ENCODE measurements at regions of chr3 and their contacts with region 1.

Region 1: DNA sequence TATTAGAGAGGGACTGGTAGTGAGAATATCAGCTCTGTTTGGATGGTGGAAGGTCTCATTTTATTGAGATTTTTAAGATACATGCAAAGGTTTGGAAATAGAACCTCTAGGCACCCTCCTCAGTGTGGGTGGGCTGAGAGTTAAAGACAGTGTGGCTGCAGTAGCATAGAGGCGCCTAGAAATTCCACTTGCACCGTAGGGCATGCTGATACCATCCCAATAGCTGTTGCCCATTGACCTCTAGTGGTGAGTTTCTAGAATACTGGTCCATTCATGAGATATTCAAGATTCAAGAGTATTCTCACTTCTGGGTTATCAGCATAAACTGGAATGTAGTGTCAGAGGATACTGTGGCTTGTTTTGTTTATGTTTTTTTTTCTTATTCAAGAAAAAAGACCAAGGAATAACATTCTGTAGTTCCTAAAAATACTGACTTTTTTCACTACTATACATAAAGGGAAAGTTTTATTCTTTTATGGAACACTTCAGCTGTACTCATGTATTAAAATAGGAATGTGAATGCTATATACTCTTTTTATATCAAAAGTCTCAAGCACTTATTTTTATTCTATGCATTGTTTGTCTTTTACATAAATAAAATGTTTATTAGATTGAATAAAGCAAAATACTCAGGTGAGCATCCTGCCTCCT is 87.2 kb downstream of the TGFBR2 start:
- DNase-seq: peak; percentile 83
- H3K4me3 Mint-ChIP-seq: no peak overlapping the region
- H3K27ac Mint-ChIP-seq: peak overlapping the region; percentile 27
- H3K4me1 Mint-ChIP-seq: peaks cover 35% of the 10 kb centered on the region
- H3K27me3 Mint-ChIP-seq: no peaks in the 10 kb centered on the region

Region 2: DNA sequence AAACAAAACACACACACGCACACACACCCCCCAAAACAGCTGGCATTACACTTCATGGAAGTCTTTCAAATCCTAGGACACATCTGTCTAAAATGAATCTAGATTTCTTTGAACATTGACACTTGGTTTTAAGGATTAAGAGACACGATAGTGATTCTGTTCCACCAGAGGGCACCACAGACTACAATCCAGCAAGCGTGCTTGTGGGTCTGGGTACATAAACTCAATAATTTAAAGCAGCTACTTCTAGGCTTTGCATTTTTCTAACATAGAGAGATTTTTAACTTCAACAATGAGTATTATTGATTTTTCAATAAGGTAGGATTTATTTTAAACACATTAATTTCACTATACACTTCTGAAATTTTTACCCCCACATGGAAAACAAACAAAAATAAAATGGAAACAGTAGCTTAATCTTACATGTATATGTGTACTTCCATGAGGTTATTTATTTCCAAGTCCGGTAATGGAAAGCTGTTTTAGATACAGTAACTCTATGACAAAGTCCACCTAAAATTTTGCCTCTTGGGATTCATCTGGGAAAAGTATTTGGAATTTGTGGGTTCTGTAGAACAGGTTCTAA is 651.2 kb before region 1 on chr3:
- intact Hi-C with region 1: loop called (anchors 1 kb)
- DNase-seq: peak; percentile 86
- H3K4me3 Mint-ChIP-seq: no peak overlapping the region
- H3K27ac Mint-ChIP-seq: no peak overlapping the region
- H3K4me1 Mint-ChIP-seq: no peaks in the 10 kb centered on the region
- H3K27me3 Mint-ChIP-seq: peaks cover 27% of the 10 kb centered on the region

Region 3: DNA sequence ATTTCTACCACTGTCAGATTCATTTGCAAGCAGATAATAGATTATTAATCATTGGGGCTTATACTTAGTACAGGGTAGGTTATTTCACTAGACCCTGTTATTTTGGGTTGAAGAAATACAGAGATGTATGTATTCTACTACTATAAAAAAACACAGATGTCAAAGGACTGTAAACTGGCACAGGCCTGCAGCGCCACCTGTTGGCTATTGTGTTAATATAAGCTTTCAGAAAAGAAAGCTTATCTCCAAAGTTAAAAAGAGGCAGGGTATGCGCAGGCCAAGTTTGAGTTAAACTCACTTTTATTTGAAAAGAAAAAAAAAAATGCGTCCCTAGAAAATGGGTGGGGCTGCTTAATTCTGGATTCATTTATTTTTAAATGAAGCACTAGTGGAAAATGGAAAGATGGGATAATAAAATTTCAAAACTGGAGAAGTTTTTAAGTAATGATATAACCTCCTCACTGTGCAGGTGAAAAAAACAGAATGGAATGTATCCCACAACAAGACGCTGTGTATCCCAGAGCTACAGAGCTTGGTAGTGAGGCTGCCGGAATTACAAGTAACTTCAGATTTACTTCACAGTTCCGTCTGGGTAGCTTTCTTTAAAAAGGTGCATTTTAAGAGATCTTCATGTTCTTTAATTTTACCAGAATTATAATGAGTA is 494.4 kb before region 1 on chr3:
- intact Hi-C with region 1: loop called (anchors 1 kb)
- DNase-seq: peak; percentile 89
- H3K4me3 Mint-ChIP-seq: no peak overlapping the region
- H3K27ac Mint-ChIP-seq: no peak overlapping the region
- H3K4me1 Mint-ChIP-seq: peaks cover 4% of the 10 kb centered on the region
- H3K27me3 Mint-ChIP-seq: peaks cover 2% of the 10 kb centered on the region

Region 4: DNA sequence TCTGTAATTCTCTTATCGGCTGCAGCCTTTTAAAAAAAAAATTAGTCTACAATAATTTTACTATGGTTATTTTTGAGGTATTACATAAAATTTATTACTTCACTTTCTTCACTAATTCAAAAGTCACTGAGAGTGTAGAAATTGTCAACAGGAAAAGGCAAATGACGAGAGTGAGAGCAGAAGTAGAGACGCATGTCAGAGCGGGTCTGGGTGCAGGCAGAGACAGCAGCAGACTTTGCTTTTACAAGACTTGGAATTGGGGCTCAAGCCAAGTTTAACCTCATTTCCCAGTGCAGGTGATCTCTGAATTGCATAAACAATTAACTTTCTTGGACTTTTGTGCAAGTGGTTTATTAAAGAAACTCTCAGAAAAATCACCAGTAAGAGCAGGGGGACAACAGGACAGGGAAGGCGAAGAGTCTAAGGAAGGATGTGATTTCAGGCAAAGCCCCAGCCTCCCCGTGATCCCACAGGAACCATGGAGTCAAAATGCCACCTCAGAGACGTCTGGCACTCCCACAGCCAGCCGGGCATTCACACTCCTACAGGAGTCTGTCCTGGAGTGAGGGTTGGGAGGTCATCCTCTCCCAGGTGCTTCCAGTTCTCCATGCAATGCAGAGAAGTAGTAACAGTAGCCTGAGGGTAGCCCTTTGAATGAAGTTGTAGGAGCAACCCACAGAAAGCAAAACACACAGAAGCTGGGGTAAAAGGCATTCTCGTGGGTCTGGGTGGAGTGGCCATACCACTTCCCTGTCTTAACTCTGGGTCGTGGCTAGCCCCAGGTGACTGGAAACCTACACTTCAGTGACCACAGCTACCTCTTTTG is 361.2 kb before region 1 on chr3:
- intact Hi-C with region 1: no loop called
- DNase-seq: peak; percentile 59
- H3K4me3 Mint-ChIP-seq: peak overlapping the region; percentile 59
- H3K27ac Mint-ChIP-seq: peak overlapping the region; percentile 45
- H3K4me1 Mint-ChIP-seq: peaks cover 13% of the 10 kb centered on the region
- H3K27me3 Mint-ChIP-seq: no peaks in the 10 kb centered on the region

Region 5: GRCh38 chr3:30453360-30454039 is 240.1 kb before region 1 on chr3:
- intact Hi-C with region 1: no loop called
- DNase-seq: no peak
- H3K4me3 Mint-ChIP-seq: no peak overlapping the region
- H3K27ac Mint-ChIP-seq: no peak overlapping the region
- H3K4me1 Mint-ChIP-seq: no peaks in the 10 kb centered on the region
- H3K27me3 Mint-ChIP-seq: no peaks in the 10 kb centered on the region

Region 6: GRCh38 chr3:30606301-30607031 is 87.1 kb before region 1 on chr3 and contains the start of gene TGFBR2:
- intact Hi-C with region 1: no loop called
- DNase-seq: peak; percentile 95
- H3K4me3 Mint-ChIP-seq: peak within 1 kb of the TSS; percentile 90
- H3K27ac Mint-ChIP-seq: peak within 1 kb of the TSS; percentile 96
- H3K4me1 Mint-ChIP-seq: peaks cover 57% of the 10 kb centered on the region
- H3K27me3 Mint-ChIP-seq: no peaks in the 10 kb centered on the region
- total RNA-seq, gene TGFBR2: 45.3 and 47.6 TPM in 2 replicates

Region 7: GRCh38 chr3:30658328-30659052 is 35.1 kb before region 1 on chr3:
- intact Hi-C with region 1: loop called (anchors 2 kb)
- DNase-seq: peak; percentile 85
- H3K4me3 Mint-ChIP-seq: peak overlapping the region; percentile 84
- H3K27ac Mint-ChIP-seq: peak overlapping the region; percentile 97
- H3K4me1 Mint-ChIP-seq: peaks cover 85% of the 10 kb centered on the region
- H3K27me3 Mint-ChIP-seq: no peaks in the 10 kb centered on the region

Measured in activated CD4-positive, alpha-beta T cell treated with anti-CD3 and anti-CD28 coated beads, Interleukin-2, amount 10 ng/mL, durations not matched to agents 24 days and 14 days (primary cell).